Endothelial cell of umbilical vein (primary cell): ENCODE measurements at regions of chr20 and their contacts with region 1.

Region 1: DNA sequence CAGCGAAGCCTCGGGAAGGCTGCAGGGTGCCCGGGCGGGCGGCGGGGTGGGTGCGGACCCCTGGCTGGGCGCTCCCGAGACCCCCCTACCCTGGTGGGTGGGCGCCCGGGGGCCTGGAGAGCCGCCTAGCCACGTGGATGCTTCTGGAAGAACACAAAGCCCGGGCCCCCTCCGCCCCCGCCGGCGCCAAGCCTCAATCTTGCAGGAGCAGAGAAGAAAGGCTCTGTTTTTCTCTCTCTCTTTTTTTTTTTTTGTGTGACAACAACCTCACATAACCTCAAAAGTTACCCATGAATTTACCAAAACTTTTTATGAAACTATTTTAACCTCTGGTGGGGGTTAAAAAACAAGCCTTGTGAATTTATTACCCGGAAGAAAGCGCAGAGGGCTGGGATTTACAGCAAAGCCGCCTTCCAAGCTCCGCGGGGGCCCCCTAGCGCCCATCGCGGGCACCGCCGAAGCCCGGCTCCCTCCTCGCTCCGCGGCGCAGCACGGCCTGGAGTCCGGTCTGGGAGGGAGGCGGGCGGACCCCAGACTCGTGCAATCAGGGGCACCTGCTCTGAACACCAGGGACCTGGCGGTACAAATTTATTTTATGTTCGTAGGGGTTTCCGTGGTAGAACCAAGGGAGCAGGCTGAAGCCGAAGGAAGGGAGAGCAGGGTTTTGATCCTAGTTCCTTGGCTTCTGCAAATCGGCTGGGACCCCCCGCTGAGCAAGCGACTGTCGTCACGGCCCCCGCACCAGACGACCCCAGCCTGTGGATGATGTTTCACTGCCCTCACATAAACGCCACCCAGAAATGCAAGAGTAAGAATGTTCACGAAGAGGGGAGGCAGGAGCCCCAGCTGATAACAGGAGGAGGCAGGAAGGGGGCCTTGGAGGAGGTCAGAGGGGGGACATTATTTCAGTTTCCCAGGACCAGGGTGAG is 58.9 kb downstream of the ZNF831 start:
- DNase-seq: peak; percentile 74
- H3K4me3 ChIP-seq: peak overlapping the region; percentile 42 to 71 (median 61)
- H3K27ac ChIP-seq: no peak overlapping the region
- H3K4me1 ChIP-seq: peaks cover 7% of the 10 kb centered on the region
- H3K27me3 ChIP-seq: peaks cover 20% of the 10 kb centered on the region in 2 experiments
- CTCF ChIP-seq: peak; percentile 96 to 97
- POLR2A ChIP-seq: no peak

Region 2: GRCh38 chr20:58721951-58722778 is 500.4 kb before region 1 on chr20:
- CTCF ChIA-PET with region 1: no interaction called
- POLR2A ChIA-PET with region 1: no interaction called
- dilution Hi-C with region 1: no loop called
- intact Hi-C with region 1: loop called (anchors 10 kb)
- DNase-seq: no peak
- H3K4me3 ChIP-seq: no peak overlapping the region
- H3K27ac ChIP-seq: no peak overlapping the region
- H3K4me1 ChIP-seq: no peaks in the 10 kb centered on the region
- H3K27me3 ChIP-seq: peaks cover 4 to 6% of the 10 kb centered on the region in 2 experiments
- CTCF ChIP-seq: no peak
- POLR2A ChIP-seq: no peak

Region 3: GRCh38 chr20:59055295-59055694 is 167.2 kb before region 1 on chr20:
- CTCF ChIA-PET with region 1: interaction called, 5 read pairs
- POLR2A ChIA-PET with region 1: no interaction called
- dilution Hi-C with region 1: no loop called
- intact Hi-C with region 1: loop called (anchors 1 kb)
- DNase-seq: peak; percentile 51
- H3K4me3 ChIP-seq: no peak overlapping the region
- H3K27ac ChIP-seq: no peak overlapping the region
- H3K4me1 ChIP-seq: no peaks in the 10 kb centered on the region
- H3K27me3 ChIP-seq: peaks cover 15 to 30% of the 10 kb centered on the region in 2 experiments
- CTCF ChIP-seq: peak in 1 of 2 donors; percentile 24
- POLR2A ChIP-seq: no peak

Region 4: GRCh38 chr20:59207742-59208357 is 14.7 kb before region 1 on chr20:
- CTCF ChIA-PET with region 1: interaction called, 21 read pairs
- POLR2A ChIA-PET with region 1: no interaction called
- dilution Hi-C with region 1: no loop called
- intact Hi-C with region 1: no loop called
- DNase-seq: peak; percentile 11
- H3K4me3 ChIP-seq: no peak overlapping the region
- H3K27ac ChIP-seq: no peak overlapping the region
- H3K4me1 ChIP-seq: no peaks in the 10 kb centered on the region
- H3K27me3 ChIP-seq: no peaks in the 10 kb centered on the region
- CTCF ChIP-seq: peak; percentile 25 to 37
- POLR2A ChIP-seq: no peak

Region 5: GRCh38 chr20:59403261-59403961 is 180.9 kb after region 1 on chr20:
- CTCF ChIA-PET with region 1: no interaction called
- POLR2A ChIA-PET with region 1: no interaction called
- dilution Hi-C with region 1: no loop called
- intact Hi-C with region 1: loop called (anchors 10 kb)
- DNase-seq: peak; percentile 16
- H3K4me3 ChIP-seq: no peak overlapping the region
- H3K27ac ChIP-seq: no peak overlapping the region
- H3K4me1 ChIP-seq: no peaks in the 10 kb centered on the region
- H3K27me3 ChIP-seq: peaks cover 9 to 12% of the 10 kb centered on the region in 2 experiments
- CTCF ChIP-seq: peak; percentile 85 to 87
- POLR2A ChIP-seq: no peak

Region 6: GRCh38 chr20:59495894-59496510 is 273.5 kb after region 1 on chr20:
- CTCF ChIA-PET with region 1: interaction called, 8 read pairs
- POLR2A ChIA-PET with region 1: no interaction called
- dilution Hi-C with region 1: no loop called
- intact Hi-C with region 1: loop called (anchors 1 kb)
- DNase-seq: peak; percentile 56
- H3K4me3 ChIP-seq: no peak overlapping the region
- H3K27ac ChIP-seq: no peak overlapping the region
- H3K4me1 ChIP-seq: no peaks in the 10 kb centered on the region
- H3K27me3 ChIP-seq: no peaks in the 10 kb centered on the region
- CTCF ChIP-seq: peak; percentile 82 to 90
- POLR2A ChIP-seq: no peak